Prostate gland (tissue), 2 donors: ENCODE measurements at regions of chr4 and their contacts with region 1.

Region 1: GRCh38 chr4:176340871-176341685 is 21.3 kb downstream of the SPCS3 start:
- DNase-seq: no peak
- H3K4me3 ChIP-seq: no peak overlapping the region
- H3K27ac ChIP-seq: no peak overlapping the region
- H3K4me1 ChIP-seq: no peaks in the 10 kb centered on the region
- H3K27me3 ChIP-seq: no peaks in the 10 kb centered on the region
- CTCF ChIP-seq: peak in 3 of 4 experiments; percentile 21 to 49 (median 32)
- POLR2A ChIP-seq: no peak

Region 2: DNA sequence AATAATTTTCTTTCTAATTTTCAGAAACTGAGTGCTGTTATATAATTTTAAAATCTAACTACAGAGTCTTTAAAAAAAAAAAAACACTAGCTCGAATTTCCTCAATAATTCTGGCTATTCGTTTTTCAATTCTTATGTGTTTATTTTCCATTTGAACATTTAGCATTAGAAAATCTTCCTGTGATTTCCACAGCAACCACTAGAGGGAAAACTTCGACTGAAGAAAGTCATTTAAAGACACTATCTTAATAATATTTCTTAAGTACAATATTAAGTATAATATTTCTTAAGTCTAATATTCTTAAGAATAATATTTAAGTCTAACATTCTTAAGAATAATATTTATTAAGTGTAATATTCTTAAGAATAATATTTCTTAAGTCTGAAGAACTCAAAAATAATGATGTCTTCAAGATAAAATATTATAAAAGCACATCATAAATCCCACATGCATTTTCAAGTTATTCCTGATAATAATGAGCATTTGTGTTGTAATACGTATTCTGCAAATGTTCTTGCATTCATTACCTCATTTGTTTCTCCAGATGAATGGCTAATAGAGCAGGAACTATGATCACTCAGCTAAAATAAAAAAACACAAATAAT is 393.9 kb before region 1 on chr4:
- intact Hi-C with region 1: loop called (anchors 10 kb)
- DNase-seq: no peak
- H3K4me3 ChIP-seq: no peak overlapping the region
- H3K27ac ChIP-seq: no peak overlapping the region
- H3K4me1 ChIP-seq: no peaks in the 10 kb centered on the region
- H3K27me3 ChIP-seq: no peaks in the 10 kb centered on the region
- CTCF ChIP-seq: peak in 3 of 4 experiments; percentile 39 to 46 (median 43)
- POLR2A ChIP-seq: no peak

Region 3: GRCh38 chr4:176034499-176034898 is 306.6 kb before region 1 on chr4:
- intact Hi-C with region 1: loop called (anchors 5 kb)
- DNase-seq: no peak
- H3K4me3 ChIP-seq: no peak overlapping the region
- H3K27ac ChIP-seq: no peak overlapping the region
- H3K4me1 ChIP-seq: no peaks in the 10 kb centered on the region
- H3K27me3 ChIP-seq: no peaks in the 10 kb centered on the region
- CTCF ChIP-seq: peak in 3 of 4 experiments; percentile 18 to 39 (median 37)
- POLR2A ChIP-seq: no peak

Region 4: GRCh38 chr4:176150356-176150682 is 190.8 kb before region 1 on chr4:
- intact Hi-C with region 1: loop called (anchors 5 kb)
- DNase-seq: no peak
- H3K4me3 ChIP-seq: no peak overlapping the region
- H3K27ac ChIP-seq: no peak overlapping the region
- H3K4me1 ChIP-seq: no peaks in the 10 kb centered on the region
- H3K27me3 ChIP-seq: no peaks in the 10 kb centered on the region
- CTCF ChIP-seq: peak in 2 of 4 experiments; percentile 40 to 61
- POLR2A ChIP-seq: no peak

Region 5: DNA sequence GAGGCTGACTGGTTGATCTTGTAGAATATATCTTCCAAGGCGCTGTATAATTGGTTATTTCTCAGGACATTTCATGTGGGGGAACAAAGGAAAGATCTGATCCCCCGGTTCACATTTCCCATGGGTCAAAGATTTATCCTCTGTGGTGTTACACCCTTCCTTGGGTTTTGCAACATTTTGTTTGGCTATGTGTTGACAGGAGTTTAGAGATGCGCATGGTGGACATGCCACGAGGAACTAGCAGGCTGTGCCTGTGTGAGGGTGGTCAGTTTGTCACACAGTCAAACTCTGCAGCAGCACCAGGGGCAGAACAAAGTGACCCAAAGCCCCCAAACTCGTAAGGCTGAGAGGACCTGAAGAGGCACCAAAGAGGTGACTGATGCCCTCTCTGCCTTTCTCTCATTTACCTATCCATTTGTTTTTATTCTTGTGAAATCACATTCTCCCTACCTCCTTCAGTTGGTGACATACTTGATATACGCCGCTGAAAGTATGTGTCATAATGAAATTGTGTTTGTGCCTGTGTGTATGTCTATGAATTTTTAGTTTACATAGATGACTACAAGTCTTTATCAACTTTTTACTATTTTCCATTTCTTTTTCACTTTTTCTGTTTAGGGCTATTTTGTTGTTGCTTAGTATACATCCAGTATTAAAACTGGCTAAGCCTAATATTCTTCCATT is 143.4 kb after region 1 on chr4:
- intact Hi-C with region 1: no loop called
- DNase-seq: no peak
- H3K4me3 ChIP-seq: no peak overlapping the region
- H3K27ac ChIP-seq: no peak overlapping the region
- H3K4me1 ChIP-seq: no peaks in the 10 kb centered on the region
- H3K27me3 ChIP-seq: no peaks in the 10 kb centered on the region
- CTCF ChIP-seq: no peak
- POLR2A ChIP-seq: no peak

Region 6: GRCh38 chr4:176622251-176622948 is 281.3 kb after region 1 on chr4:
- intact Hi-C with region 1: no loop called
- DNase-seq: no peak
- H3K4me3 ChIP-seq: no peak overlapping the region
- H3K27ac ChIP-seq: no peak overlapping the region
- H3K4me1 ChIP-seq: no peaks in the 10 kb centered on the region
- H3K27me3 ChIP-seq: no peaks in the 10 kb centered on the region
- CTCF ChIP-seq: no peak
- POLR2A ChIP-seq: no peak

Region 7: GRCh38 chr4:176818531-176818930 is 477.5 kb after region 1 on chr4:
- intact Hi-C with region 1: no loop called
- DNase-seq: no peak
- H3K4me3 ChIP-seq: no peak overlapping the region
- H3K27ac ChIP-seq: no peak overlapping the region
- H3K4me1 ChIP-seq: no peaks in the 10 kb centered on the region
- H3K27me3 ChIP-seq: no peaks in the 10 kb centered on the region
- CTCF ChIP-seq: no peak
- POLR2A ChIP-seq: no peak